ENCODE measurements at regions of chr3 and their contacts with region 1.

Region 1: GRCh38 chr3:14047841-14048240 is 76.8 kb downstream of the CHCHD4 start:
- DNase-seq: no peak
- H3K4me3 Mint-ChIP-seq: no peak overlapping the region
- H3K27ac Mint-ChIP-seq: no peak overlapping the region
- H3K4me1 Mint-ChIP-seq: no peaks in the 10 kb centered on the region
- H3K27me3 Mint-ChIP-seq: peaks cover 20% of the 10 kb centered on the region

Region 2: GRCh38 chr3:14092464-14092863 is 44.6 kb after region 1 on chr3:
- intact Hi-C with region 1: loop called (anchors 1 kb)
- DNase-seq: no peak
- H3K4me3 Mint-ChIP-seq: no peak overlapping the region
- H3K27ac Mint-ChIP-seq: no peak overlapping the region
- H3K4me1 Mint-ChIP-seq: no peaks in the 10 kb centered on the region
- H3K27me3 Mint-ChIP-seq: peaks cover 7% of the 10 kb centered on the region

Region 3: DNA sequence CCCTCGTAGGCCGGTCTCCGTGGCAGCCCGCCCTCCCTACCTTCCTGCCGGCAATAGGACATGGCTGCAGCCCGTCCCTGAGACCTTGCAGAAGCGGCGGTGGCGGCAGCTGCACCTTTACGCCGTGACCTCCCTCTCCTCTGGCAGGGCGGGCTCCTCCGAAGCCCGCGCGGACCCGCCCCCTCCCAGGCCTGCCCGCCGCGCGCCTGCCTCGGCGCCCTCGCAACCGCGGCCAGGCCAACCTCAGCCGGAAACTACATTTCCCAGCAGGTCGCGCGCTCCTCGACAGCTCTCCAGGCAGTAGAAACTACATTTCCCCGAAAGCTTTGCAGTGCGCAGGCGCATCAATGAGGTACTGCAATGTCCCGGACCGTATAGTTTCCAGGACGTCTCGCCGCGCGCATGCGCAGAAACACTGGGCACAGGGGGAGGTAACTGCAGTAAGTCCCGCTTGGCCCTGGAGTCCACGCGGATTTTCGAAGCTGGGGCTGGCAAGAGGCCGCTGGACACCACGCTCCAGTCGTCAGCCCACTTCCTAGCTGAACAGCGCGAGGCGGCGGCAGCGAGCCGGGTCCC is 76.9 kb after region 1 on chr3 and contains the starts of genes CHCHD4 and TMEM43:
- intact Hi-C with region 1: no loop called
- DNase-seq: peak; percentile 99
- H3K4me3 Mint-ChIP-seq: peak within 1 kb of the TSS; percentile 98
- H3K27ac Mint-ChIP-seq: peak within 1 kb of the TSS; percentile 95
- H3K4me1 Mint-ChIP-seq: peaks cover 54% of the 10 kb centered on the region
- H3K27me3 Mint-ChIP-seq: no peaks in the 10 kb centered on the region
- total RNA-seq, gene CHCHD4: 27.7 and 29.6 TPM in 2 replicates
- total RNA-seq, gene TMEM43: 38.7 and 39.4 TPM in 2 replicates